ENCODE measurements at regions of chr16 and their contacts with region 1.

Region 1: GRCh38 chr16:56317998-56318826 is 107.1 kb downstream of the AMFR start:
- DNase-seq: peak; percentile 79
- H3K4me3 Mint-ChIP-seq: no peak overlapping the region
- H3K27ac Mint-ChIP-seq: no peak overlapping the region
- H3K4me1 Mint-ChIP-seq: no peaks in the 10 kb centered on the region
- H3K27me3 Mint-ChIP-seq: peaks cover 30% of the 10 kb centered on the region
- CTCF ChIP-seq: peak; percentile 96

Region 2: GRCh38 chr16:55711959-55712876 is 606.0 kb before region 1 on chr16:
- CTCF ChIA-PET with region 1: interaction called, 4 read pairs
- POLR2A ChIA-PET with region 1: no interaction called
- intact Hi-C with region 1: loop called (anchors 2 kb)
- DNase-seq: peak; percentile 74
- H3K4me3 Mint-ChIP-seq: no peak overlapping the region
- H3K27ac Mint-ChIP-seq: no peak overlapping the region
- H3K4me1 Mint-ChIP-seq: no peaks in the 10 kb centered on the region
- H3K27me3 Mint-ChIP-seq: no peaks in the 10 kb centered on the region
- CTCF ChIP-seq: peak; percentile 63

Region 3: DNA sequence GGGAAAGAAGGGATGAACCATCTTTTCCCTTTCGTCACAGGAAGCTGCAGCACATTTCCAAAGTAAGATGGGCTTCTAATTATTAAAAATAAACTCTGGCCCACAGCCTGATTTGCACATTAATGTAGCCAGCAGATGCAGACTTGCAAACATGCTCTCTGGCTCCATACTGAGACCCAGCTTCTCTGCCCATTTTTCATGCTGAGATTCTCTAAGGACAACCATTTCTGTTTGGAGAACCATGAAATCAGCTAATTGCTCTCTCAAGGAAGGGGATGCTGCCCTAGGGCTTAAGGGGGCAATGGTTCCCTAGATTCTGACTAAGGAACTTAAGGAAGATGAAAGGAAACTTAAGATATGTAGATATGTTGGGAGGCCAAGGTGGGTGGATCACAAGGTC is 380.1 kb before region 1 on chr16:
- CTCF ChIA-PET with region 1: interaction called, 205 read pairs
- POLR2A ChIA-PET with region 1: interaction called, 5 read pairs
- intact Hi-C with region 1: no loop called
- DNase-seq: no peak
- H3K4me3 Mint-ChIP-seq: no peak overlapping the region
- H3K27ac Mint-ChIP-seq: no peak overlapping the region
- H3K4me1 Mint-ChIP-seq: no peaks in the 10 kb centered on the region
- H3K27me3 Mint-ChIP-seq: peaks cover 83% of the 10 kb centered on the region
- CTCF ChIP-seq: no peak

Region 4: GRCh38 chr16:56191156-56191815 is 126.9 kb before region 1 on chr16 and contains the start of gene GNAO1:
- CTCF ChIA-PET with region 1: interaction called, 3 read pairs
- POLR2A ChIA-PET with region 1: no interaction called
- intact Hi-C with region 1: loop called (anchors 5 kb)
- DNase-seq: peak; percentile 32
- H3K4me3 Mint-ChIP-seq: peak within 1 kb of the TSS; percentile 79
- H3K27ac Mint-ChIP-seq: no peak within 1 kb of the TSS
- H3K4me1 Mint-ChIP-seq: no peaks in the 10 kb centered on the region
- H3K27me3 Mint-ChIP-seq: peaks cover 82% of the 10 kb centered on the region
- CTCF ChIP-seq: no peak
- total RNA-seq, gene GNAO1: 0.44 TPM in 1 of 2 replicates, not detected in the other

Region 5: DNA sequence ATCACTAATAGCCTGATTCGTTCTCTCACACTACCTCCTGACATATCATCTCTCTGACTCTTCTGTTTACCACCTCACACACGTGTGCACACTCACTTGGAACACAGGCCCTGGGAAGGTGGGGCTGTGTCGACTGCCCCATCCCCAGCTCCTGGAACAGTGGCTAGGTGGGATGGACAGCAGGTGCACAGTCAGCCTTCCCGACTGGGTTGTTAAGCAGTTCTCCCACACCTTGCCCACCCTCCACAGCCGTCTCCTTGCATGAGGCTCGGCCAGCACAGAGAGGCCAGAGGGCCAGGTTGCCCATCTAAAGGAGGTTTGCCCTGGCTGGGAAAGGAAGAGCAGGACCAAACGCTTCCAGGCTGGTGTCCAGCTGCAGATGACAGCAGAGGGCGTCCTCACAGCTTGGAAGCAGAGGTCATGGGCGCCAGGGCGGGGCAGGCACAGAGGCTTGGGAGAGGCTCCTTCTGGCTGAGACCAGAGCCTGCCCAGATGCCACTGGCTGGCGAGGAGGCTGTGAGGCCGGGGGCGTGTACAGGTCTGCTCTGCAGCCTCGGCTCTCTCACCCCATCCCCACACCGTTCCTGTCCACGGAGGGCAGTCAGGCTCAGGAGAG is 14.4 kb after region 1 on chr16:
- CTCF ChIA-PET with region 1: interaction called, 41 read pairs
- POLR2A ChIA-PET with region 1: interaction called, 3 read pairs
- intact Hi-C with region 1: no loop called
- DNase-seq: peak; percentile 88
- H3K4me3 Mint-ChIP-seq: no peak overlapping the region
- H3K27ac Mint-ChIP-seq: no peak overlapping the region
- H3K4me1 Mint-ChIP-seq: peaks cover 15% of the 10 kb centered on the region
- H3K27me3 Mint-ChIP-seq: no peaks in the 10 kb centered on the region
- CTCF ChIP-seq: peak; percentile 70

Region 6: DNA sequence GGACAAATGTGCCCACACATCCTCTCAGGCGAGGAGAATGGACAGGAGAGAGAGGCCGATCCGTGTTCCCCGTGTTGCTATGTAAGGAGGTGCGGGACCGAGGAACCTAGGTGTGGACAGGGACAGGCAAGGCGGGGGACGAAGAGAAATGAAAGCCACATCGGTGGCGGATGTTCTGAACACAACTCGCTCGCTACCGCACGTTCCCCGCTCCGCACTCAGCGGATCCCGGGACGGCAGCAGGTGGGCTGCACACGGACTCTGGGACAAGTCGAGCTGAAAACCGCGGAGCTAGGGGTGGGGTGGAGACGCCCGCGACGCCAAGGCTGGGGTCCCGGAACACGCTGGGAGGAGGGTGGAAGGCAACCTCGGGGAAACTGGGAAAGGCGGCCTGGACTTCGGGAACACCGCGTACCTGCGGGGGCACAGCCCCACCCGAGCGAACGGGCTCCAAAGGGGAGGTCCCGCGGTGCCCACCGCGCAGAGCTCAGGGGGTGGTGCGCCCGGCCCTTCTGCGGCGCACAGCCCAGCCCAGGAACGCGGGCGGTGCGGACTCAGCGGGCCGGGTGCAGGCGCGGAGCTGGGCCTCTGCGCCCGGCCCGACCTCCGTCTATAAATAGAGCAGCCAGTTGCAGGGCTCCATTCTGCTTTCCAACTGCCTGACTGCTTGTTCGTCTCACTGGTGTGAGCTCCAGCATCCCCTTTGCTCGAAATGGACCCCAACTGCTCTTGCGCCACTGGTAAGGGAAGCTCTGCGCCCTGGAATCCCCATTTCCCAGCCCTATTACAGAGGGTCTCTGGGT is 307.1 kb after region 1 on chr16 and contains the start of gene MT1E:
- CTCF ChIA-PET with region 1: no interaction called
- POLR2A ChIA-PET with region 1: no interaction called
- intact Hi-C with region 1: no loop called
- DNase-seq: peak; percentile 81
- H3K4me3 Mint-ChIP-seq: peak within 1 kb of the TSS; percentile 95
- H3K27ac Mint-ChIP-seq: peak within 1 kb of the TSS; percentile 81
- H3K4me1 Mint-ChIP-seq: peaks cover 11% of the 10 kb centered on the region
- H3K27me3 Mint-ChIP-seq: no peaks in the 10 kb centered on the region
- CTCF ChIP-seq: no peak
- total RNA-seq, gene MT1E: 518 and 934 TPM in 2 replicates

Measured in MCF 10A (cell line).